ENCODE measurements at regions of chr18 and their contacts with region 1.

Region 1: DNA sequence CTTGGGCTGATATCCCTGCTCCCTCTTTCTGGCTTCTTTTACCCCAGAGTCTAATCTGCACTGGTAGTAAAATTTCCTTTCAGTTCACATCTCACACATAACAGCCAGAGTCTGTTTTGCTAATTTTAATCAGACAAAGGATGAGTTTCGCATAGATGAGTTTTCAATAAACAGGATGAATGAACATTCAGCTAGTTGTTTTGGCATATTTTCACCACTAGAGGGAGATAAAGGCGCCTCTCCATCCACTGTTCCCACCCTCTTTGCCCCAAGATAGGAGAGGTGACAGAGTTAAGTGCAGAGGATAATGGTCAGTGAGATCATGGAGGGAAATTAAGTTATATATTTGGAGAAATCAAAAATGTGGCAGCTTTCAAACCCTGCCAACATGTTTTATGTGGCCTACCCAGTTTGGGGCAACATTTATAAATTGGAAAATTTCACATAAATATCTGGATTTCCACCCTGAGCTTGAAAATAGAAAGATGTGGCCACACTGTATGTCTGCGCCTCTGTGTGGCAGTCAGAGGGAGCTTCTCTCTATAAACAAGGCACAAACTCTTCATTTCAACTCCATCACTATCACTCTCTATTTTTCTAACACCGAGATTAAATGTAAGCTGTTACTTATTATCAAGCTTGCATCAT is 48.5 kb upstream of the DTNA start:
- DNase-seq: peak; percentile 55
- H3K4me3 ChIP-seq: no peak overlapping the region
- H3K27ac ChIP-seq: peak overlapping the region in 1 of 2 experiments; percentile 14; a peak in 1 of 4 replicates
- H3K4me1 ChIP-seq: peaks cover 7 to 17% of the 10 kb centered on the region in 2 experiments; a peak in 3 of 4 replicates
- H3K27me3 ChIP-seq: no peaks in the 10 kb centered on the region
- CTCF ChIP-seq: peak; percentile 94
- EP300 ChIP-seq: no peak
- RAD21 ChIP-seq: peak; percentile 82

Region 2: GRCh38 chr18:34493566-34494358 is 167.8 kb before region 1 on chr18:
- CTCF ChIA-PET with region 1: interaction called, 12 read pairs
- POLR2A ChIA-PET with region 1: no interaction called
- DNase-seq: peak; percentile 84
- H3K4me3 ChIP-seq: peak overlapping the region; percentile 53 to 58
- H3K27ac ChIP-seq: peak overlapping the region in 1 of 2 experiments; percentile 73; a peak in 2 of 4 replicates
- H3K4me1 ChIP-seq: no peaks in the 10 kb centered on the region; a peak in 2 of 4 replicates
- H3K27me3 ChIP-seq: no peaks in the 10 kb centered on the region
- CTCF ChIP-seq: no peak
- EP300 ChIP-seq: no peak
- RAD21 ChIP-seq: no peak

Region 3: GRCh38 chr18:34676816-34677574 is 15.4 kb after region 1 on chr18:
- CTCF ChIA-PET with region 1: interaction called, 40 read pairs
- POLR2A ChIA-PET with region 1: no interaction called
- DNase-seq: no peak
- H3K4me3 ChIP-seq: no peak overlapping the region
- H3K27ac ChIP-seq: no peak overlapping the region
- H3K4me1 ChIP-seq: peaks cover 0 to 3% of the 10 kb centered on the region in 2 experiments; a peak in 1 of 4 replicates
- H3K27me3 ChIP-seq: no peaks in the 10 kb centered on the region
- CTCF ChIP-seq: no peak
- EP300 ChIP-seq: no peak
- RAD21 ChIP-seq: no peak

Region 4: GRCh38 chr18:34752056-34752455 is 90.5 kb after region 1 on chr18:
- CTCF ChIA-PET with region 1: interaction called, 13 read pairs
- POLR2A ChIA-PET with region 1: no interaction called
- DNase-seq: no peak
- H3K4me3 ChIP-seq: no peak overlapping the region
- H3K27ac ChIP-seq: no peak overlapping the region
- H3K4me1 ChIP-seq: peaks cover 0 to 3% of the 10 kb centered on the region in 2 experiments; a peak in 2 of 4 replicates
- H3K27me3 ChIP-seq: no peaks in the 10 kb centered on the region
- CTCF ChIP-seq: no peak
- EP300 ChIP-seq: no peak
- RAD21 ChIP-seq: no peak

Region 5: DNA sequence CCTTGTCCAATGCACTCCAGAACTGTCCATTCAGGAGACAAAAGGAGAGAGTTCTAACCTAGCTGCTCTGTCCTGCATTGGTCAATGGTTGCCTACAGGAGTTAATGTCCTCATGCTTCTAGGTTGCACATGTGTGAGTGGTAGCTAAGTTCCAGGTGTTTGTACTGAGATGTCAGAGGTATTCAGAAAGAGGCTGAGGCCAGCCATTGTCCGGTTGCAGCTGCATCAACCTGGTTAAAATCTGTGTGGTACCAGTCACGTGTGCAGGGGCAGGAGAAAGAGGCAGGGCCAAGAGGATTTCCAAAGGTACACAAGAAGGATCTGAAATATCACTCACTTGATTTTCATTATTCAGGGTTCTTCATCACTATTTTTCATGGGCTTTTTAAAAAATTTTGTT is 119.3 kb after region 1 on chr18:
- CTCF ChIA-PET with region 1: interaction called, 67 read pairs
- POLR2A ChIA-PET with region 1: no interaction called
- DNase-seq: no peak
- H3K4me3 ChIP-seq: no peak overlapping the region
- H3K27ac ChIP-seq: no peak overlapping the region
- H3K4me1 ChIP-seq: 0 out of 4 replicates have a peak, but pooled peaks cover 0 to 6% of the 10 kb centered on the region in 2 experiments
- H3K27me3 ChIP-seq: no peaks in the 10 kb centered on the region
- CTCF ChIP-seq: no peak
- EP300 ChIP-seq: no peak
- RAD21 ChIP-seq: no peak

Region 6: DNA sequence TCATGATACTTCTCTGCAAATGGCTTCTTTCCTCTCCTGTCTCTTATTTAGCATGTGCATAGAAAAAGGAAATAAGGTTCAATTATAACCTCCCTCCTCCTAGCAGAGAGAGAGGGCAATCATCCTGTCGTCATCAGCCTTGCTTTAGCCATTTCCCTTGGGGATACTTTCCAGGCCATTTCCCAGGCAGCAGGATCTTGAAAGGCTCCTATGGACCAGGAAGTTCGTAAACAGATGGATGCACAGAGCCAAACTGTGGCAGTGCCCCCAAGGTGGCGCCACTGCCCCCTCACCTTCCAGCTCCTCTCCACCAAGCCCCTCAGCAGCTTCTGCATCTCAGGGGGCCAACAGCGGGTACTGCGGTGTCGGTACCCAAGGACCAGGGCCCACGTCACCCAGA is 205.9 kb after region 1 on chr18:
- CTCF ChIA-PET with region 1: no interaction called
- POLR2A ChIA-PET with region 1: no interaction called
- DNase-seq: peak; percentile 57
- H3K4me3 ChIP-seq: no peak overlapping the region; a peak in 1 of 4 replicates
- H3K27ac ChIP-seq: no peak overlapping the region
- H3K4me1 ChIP-seq: peaks cover 0 to 4% of the 10 kb centered on the region in 2 experiments; a peak in 2 of 4 replicates
- H3K27me3 ChIP-seq: no peaks in the 10 kb centered on the region
- CTCF ChIP-seq: peak; percentile 39
- EP300 ChIP-seq: no peak
- RAD21 ChIP-seq: peak; percentile 29

Region 7: GRCh38 chr18:34880882-34881834 is 219.6 kb after region 1 on chr18:
- CTCF ChIA-PET with region 1: no interaction called
- POLR2A ChIA-PET with region 1: no interaction called
- DNase-seq: no peak
- H3K4me3 ChIP-seq: no peak overlapping the region
- H3K27ac ChIP-seq: no peak overlapping the region
- H3K4me1 ChIP-seq: no peaks in the 10 kb centered on the region
- H3K27me3 ChIP-seq: no peaks in the 10 kb centered on the region
- CTCF ChIP-seq: peak; percentile 47
- EP300 ChIP-seq: no peak
- RAD21 ChIP-seq: peak; percentile 57

Measured in SK-N-SH (cell line).